ENCODE measurements at regions of chr5 and their contacts with region 1.

Region 1: DNA sequence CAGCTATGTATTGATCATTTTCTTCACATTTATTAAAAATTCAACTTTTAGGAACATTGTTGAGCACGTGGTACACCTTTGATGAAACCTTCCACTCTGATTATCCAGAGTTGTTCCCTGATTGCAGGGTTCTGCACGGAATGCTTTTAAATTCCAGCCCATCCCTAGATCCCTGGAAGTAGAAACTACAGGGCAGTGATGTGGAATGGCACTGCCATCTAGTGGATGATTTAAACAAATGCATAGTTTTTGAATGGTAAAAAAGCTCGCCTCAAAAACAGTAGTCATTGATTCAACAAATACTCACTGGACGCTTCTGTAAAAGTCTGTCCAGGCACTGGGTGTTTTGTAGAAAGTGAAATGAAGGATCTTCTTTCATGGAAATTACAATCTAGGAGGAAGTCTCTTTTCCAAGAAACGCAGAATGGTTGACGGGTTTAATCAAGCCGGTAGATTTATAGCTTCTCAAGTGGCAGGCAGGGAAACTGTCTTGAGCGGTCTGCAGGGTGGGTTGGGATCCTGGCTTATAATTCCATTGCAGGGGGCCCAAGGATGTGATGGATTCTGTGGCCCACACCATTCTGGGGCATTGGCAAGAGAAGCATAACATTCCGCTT is 118.4 kb downstream of the ARHGAP26 start:
- DNase-seq: peak in 3 of 4 donors; percentile 27 to 46 (median 31)
- ATAC-seq: peak; percentile 85
- H3K4me3 ChIP-seq: no peak overlapping the region
- H3K27ac ChIP-seq: no peak overlapping the region
- H3K4me1 ChIP-seq: no peaks in the 10 kb centered on the region
- H3K27me3 ChIP-seq: no peaks in the 10 kb centered on the region
- CTCF ChIP-seq: peak; percentile 47 to 86 (median 73)
- POLR2A ChIP-seq: no peak

Region 2: GRCh38 chr5:142716963-142717362 is 171.6 kb before region 1 on chr5:
- intact Hi-C with region 1: loop called (anchors 5 kb)
- DNase-seq: peak; percentile 45 to 65 (median 60)
- ATAC-seq: peak; percentile 30
- H3K4me3 ChIP-seq: no peak overlapping the region
- H3K27ac ChIP-seq: no peak overlapping the region
- H3K4me1 ChIP-seq: peaks cover 16% of the 10 kb centered on the region
- H3K27me3 ChIP-seq: no peaks in the 10 kb centered on the region
- CTCF ChIP-seq: peak in 5 of 7 experiments; percentile 18 to 44 (median 36)
- POLR2A ChIP-seq: no peak

Region 3: DNA sequence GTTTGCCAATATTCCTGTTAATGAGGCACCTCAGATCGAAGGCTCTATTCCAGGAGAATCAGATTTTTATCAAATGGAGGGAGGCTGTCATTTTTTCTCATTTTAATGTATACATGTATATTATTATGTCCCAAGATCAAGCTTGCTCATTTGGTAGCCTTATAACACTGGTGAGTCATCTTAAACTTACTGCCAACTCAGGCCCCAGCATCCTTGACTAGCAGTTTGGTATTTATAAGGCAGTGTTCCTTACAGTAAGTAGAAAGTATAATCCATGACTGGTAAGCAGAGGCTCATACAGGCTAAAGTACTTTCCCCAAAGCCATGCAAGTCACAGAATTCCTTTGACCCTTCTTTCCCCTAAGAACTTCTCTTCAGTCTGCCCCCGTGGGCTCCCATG is 605.6 kb after region 1 on chr5:
- intact Hi-C with region 1: no loop called
- DNase-seq: no peak
- ATAC-seq: no peak
- H3K4me3 ChIP-seq: no peak overlapping the region
- H3K27ac ChIP-seq: no peak overlapping the region
- H3K4me1 ChIP-seq: peaks cover 13% of the 10 kb centered on the region
- H3K27me3 ChIP-seq: no peaks in the 10 kb centered on the region
- CTCF ChIP-seq: no peak
- POLR2A ChIP-seq: no peak